Activated CD8-positive, alpha-beta T cell treated with anti-CD3 and anti-CD28 coated beads, Interleukin-2, amount 10 ng/mL, durations not matched to agents 7 days and 5 days (primary cell): ENCODE measurements at regions of chr16 and their contacts with region 1.

Region 1: DNA sequence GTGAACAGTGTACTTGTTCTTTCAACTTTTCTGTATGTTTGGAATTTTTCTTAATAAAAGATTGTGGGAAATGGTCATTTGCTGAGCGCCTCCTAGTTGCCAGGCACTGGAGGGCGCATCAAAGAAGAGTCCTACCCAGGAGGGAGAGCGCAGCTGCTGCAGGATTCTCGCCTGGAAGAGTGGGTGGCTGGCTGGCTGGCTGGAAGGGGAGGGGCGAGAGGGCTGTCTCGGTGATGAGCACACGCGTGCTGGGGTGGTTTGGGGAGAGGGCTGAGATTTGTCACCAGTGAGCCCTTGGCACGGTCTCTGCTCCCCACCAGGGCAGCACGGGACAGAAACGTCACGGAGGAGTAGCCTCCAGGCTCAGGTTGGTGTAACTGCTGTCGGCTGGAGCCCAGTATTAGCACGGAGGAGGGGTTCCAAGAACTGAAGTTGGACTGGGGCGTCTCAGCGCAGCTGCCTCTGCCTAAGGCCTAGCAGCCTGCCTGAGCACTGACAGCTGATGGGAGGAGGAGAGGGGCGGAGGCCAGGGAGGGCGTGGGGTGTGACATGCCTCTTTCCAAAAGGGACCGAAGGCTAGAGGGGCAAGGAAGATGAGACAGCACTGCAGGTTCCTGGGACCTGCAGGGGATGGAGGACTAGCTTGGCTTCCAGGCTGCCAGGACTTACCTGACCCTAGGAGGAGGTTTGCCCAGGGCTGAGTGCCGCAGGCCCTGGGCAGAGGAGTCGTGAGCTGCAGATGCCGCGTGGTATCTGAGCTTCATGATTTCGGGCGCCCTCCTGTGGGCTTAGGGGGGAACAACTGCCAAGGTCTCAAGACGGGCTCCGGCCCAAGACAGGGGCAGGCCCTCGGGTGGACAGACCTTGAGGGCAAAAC is 5.7 kb downstream of the LDHD start:
- DNase-seq: peak; percentile 89
- ATAC-seq: peak; percentile 85
- H3K4me3 Mint-ChIP-seq: peak overlapping the region; percentile 25
- H3K27ac Mint-ChIP-seq: peak overlapping the region; percentile 67
- H3K4me1 Mint-ChIP-seq: peaks cover 58% of the 10 kb centered on the region
- H3K27me3 Mint-ChIP-seq: no peaks in the 10 kb centered on the region

Region 2: GRCh38 chr16:74862741-74863244 is 248.1 kb before region 1 on chr16:
- CTCF ChIA-PET with region 1: interaction called, 20 read pairs
- POLR2A ChIA-PET with region 1: no interaction called
- DNase-seq: no peak
- ATAC-seq: no peak
- H3K4me3 Mint-ChIP-seq: no peak overlapping the region
- H3K27ac Mint-ChIP-seq: no peak overlapping the region
- H3K4me1 Mint-ChIP-seq: peaks cover 7% of the 10 kb centered on the region
- H3K27me3 Mint-ChIP-seq: no peaks in the 10 kb centered on the region

Region 3: GRCh38 chr16:74998481-74999218 is 112.2 kb before region 1 on chr16 and contains the start of gene ZNRF1:
- CTCF ChIA-PET with region 1: interaction called, 205 read pairs
- POLR2A ChIA-PET with region 1: interaction called, 23 read pairs
- DNase-seq: peak; percentile 89
- ATAC-seq: peak; percentile 86
- H3K4me3 Mint-ChIP-seq: peak within 1 kb of the TSS; percentile 79
- H3K27ac Mint-ChIP-seq: peak within 1 kb of the TSS; percentile 78
- H3K4me1 Mint-ChIP-seq: peaks cover 23% of the 10 kb centered on the region
- H3K27me3 Mint-ChIP-seq: peaks cover 25% of the 10 kb centered on the region
- total RNA-seq, gene ZNRF1: 8.5 to 11.1 TPM

Region 4: DNA sequence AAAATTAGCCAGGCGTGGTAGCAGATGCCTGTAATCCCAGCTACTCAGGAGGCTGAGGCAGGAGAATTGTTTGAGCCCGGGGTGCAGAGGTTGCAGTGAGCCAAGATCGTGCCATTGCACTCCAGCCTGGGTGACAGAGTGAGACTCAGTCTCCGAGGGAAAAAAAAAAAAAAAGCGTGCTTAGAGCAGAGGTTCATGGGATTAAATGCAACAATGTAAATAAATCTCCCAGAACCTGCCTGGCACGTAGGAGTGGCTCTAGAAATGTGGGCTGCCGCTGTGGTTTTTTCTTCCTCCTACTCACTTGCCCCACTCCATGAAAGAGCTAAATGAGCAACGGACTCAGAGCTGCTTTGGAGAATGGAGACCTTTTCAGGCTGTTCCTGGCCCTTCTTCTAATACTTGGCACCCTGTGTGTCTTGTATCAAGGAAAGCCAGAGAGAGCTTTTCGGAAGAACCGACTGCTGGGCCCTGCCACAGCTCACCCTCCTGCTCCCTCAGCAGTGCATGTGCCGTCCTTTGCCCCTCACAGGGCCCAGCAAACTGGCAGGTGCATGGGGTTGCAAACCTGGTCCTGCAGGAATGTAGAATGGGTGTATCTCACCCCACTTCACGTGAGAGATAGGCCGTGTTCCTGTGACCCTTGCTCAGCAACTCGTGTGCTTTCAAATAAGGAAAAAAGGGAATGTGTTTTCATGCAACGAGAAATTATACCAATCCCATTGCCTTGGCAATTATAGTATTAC is 46.3 kb before region 1 on chr16:
- CTCF ChIA-PET with region 1: interaction called, 62 read pairs
- POLR2A ChIA-PET with region 1: interaction called, 4 read pairs
- DNase-seq: peak; percentile 49
- ATAC-seq: peak; percentile 58
- H3K4me3 Mint-ChIP-seq: peak overlapping the region; percentile 64
- H3K27ac Mint-ChIP-seq: peak overlapping the region; percentile 72
- H3K4me1 Mint-ChIP-seq: peaks cover 34% of the 10 kb centered on the region
- H3K27me3 Mint-ChIP-seq: no peaks in the 10 kb centered on the region

Region 5: DNA sequence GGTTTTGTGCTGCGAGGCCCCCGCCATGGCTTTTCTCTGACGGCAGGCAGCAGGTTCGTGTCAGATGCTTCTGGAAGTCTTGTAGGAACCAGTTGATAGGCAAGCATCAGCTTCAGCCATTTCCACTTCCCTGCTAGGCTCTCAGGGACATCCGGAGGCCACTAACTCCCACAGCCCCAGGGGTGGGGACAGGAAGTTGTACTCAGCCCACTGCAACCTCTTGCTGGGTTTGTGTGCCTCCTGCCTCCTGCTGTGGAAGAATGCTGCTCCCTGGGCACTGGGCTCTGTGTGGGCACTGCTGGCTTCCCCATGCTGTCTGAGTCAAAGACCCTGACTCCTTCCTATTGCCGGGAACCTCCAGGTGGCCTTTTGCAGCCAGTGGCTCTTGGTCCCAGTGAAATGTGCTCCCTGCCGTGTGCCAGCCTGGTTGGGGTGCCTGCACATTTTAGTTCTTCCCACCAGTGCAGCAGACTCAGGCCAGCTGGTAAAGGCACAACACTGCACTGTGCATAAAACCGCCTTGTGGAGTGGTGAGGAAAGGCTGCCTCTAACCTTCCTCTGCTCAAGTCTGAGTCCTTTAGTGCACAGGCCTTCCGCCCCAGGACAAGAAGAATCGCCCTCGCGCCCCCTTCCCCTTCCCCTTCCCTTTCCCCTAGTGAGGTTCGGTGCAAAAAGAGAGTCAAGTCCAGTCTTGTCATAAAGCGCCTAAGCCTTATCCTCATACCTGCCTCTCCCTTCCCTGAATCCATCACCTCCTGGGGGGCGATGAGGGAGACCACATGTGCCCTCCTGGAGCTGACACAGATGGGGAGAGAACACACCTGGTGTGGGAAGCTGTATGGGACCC is 10.9 kb before region 1 on chr16:
- CTCF ChIA-PET with region 1: interaction called, 87 read pairs
- POLR2A ChIA-PET with region 1: interaction called, 11 read pairs
- DNase-seq: peak; percentile 72
- ATAC-seq: peak; percentile 71
- H3K4me3 Mint-ChIP-seq: peak overlapping the region; percentile 45
- H3K27ac Mint-ChIP-seq: peak overlapping the region; percentile 91
- H3K4me1 Mint-ChIP-seq: peaks cover 46% of the 10 kb centered on the region
- H3K27me3 Mint-ChIP-seq: no peaks in the 10 kb centered on the region